ENCODE measurements at regions of chr14 and their contacts with region 1.

Region 1: GRCh38 chr14:64764641-64765520 is 60.7 kb downstream of the PLEKHG3 start:
- DNase-seq: peak; percentile 79
- ATAC-seq: peak; percentile 74
- H3K4me3 Mint-ChIP-seq: no peak overlapping the region
- H3K27ac Mint-ChIP-seq: no peak overlapping the region
- H3K4me1 Mint-ChIP-seq: peaks cover 35% of the 10 kb centered on the region
- H3K27me3 Mint-ChIP-seq: peaks cover 18% of the 10 kb centered on the region

Region 2: GRCh38 chr14:63875311-63875710 is 889.6 kb before region 1 on chr14:
- CTCF ChIA-PET with region 1: no interaction called
- DNase-seq: no peak
- ATAC-seq: no peak
- H3K4me3 Mint-ChIP-seq: no peak overlapping the region
- H3K27ac Mint-ChIP-seq: no peak overlapping the region
- H3K4me1 Mint-ChIP-seq: peaks cover 20% of the 10 kb centered on the region
- H3K27me3 Mint-ChIP-seq: no peaks in the 10 kb centered on the region

Region 3: DNA sequence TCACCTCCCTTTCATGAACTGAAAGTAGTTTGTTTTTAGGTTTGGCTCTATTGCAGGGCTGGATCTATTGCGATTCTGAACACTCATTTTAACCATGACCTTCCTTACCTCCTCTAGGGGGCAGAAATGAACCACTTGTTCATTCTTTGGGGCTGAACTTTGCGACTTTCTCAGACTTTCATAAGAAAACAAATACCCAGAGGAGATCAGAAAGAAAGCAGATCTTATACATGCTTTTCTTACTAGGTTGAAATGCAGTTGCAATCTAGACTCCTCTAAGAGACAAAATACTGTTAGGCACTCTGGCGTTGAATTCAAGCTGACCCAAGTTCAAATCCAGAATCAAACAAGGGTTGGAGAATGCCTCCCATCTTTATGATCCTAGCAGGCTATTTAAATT is 93.3 kb before region 1 on chr14:
- CTCF ChIA-PET with region 1: interaction called, 183 read pairs
- DNase-seq: no peak
- ATAC-seq: peak; percentile 55
- H3K4me3 Mint-ChIP-seq: no peak overlapping the region
- H3K27ac Mint-ChIP-seq: no peak overlapping the region
- H3K4me1 Mint-ChIP-seq: peaks cover 42% of the 10 kb centered on the region
- H3K27me3 Mint-ChIP-seq: peaks cover 12% of the 10 kb centered on the region

Region 4: GRCh38 chr14:64688811-64689281 is 76.0 kb before region 1 on chr14:
- CTCF ChIA-PET with region 1: interaction called, 11 read pairs
- DNase-seq: no peak
- ATAC-seq: no peak
- H3K4me3 Mint-ChIP-seq: no peak overlapping the region
- H3K27ac Mint-ChIP-seq: no peak overlapping the region
- H3K4me1 Mint-ChIP-seq: peaks cover 18% of the 10 kb centered on the region
- H3K27me3 Mint-ChIP-seq: peaks cover 16% of the 10 kb centered on the region

Region 5: GRCh38 chr14:64704143-64704742 is 60.6 kb before region 1 on chr14 and contains the start of gene PLEKHG3:
- CTCF ChIA-PET with region 1: interaction called, 12 read pairs
- DNase-seq: no peak
- ATAC-seq: peak; percentile 47
- H3K4me3 Mint-ChIP-seq: peak within 1 kb of the TSS; percentile 67
- H3K27ac Mint-ChIP-seq: peak within 1 kb of the TSS; percentile 47
- H3K4me1 Mint-ChIP-seq: peaks cover 61% of the 10 kb centered on the region
- H3K27me3 Mint-ChIP-seq: peaks cover 64% of the 10 kb centered on the region
- total RNA-seq, gene PLEKHG3: 11.9 to 28.2 TPM

Region 6: GRCh38 chr14:64835431-64835830 is 70.5 kb after region 1 on chr14:
- CTCF ChIA-PET with region 1: no interaction called
- DNase-seq: no peak
- ATAC-seq: no peak
- H3K4me3 Mint-ChIP-seq: no peak overlapping the region
- H3K27ac Mint-ChIP-seq: no peak overlapping the region
- H3K4me1 Mint-ChIP-seq: no peaks in the 10 kb centered on the region
- H3K27me3 Mint-ChIP-seq: peaks cover 35% of the 10 kb centered on the region

Region 7: GRCh38 chr14:64906022-64906421 is 141.1 kb after region 1 on chr14:
- CTCF ChIA-PET with region 1: no interaction called
- DNase-seq: no peak
- ATAC-seq: no peak
- H3K4me3 Mint-ChIP-seq: no peak overlapping the region
- H3K27ac Mint-ChIP-seq: no peak overlapping the region
- H3K4me1 Mint-ChIP-seq: peaks cover 4% of the 10 kb centered on the region
- H3K27me3 Mint-ChIP-seq: peaks cover 54% of the 10 kb centered on the region

Region 8: GRCh38 chr14:64942531-64943111 is 177.7 kb after region 1 on chr14 and contains the start of gene GPX2:
- CTCF ChIA-PET with region 1: no interaction called
- DNase-seq: peak; percentile 33
- ATAC-seq: no peak
- H3K4me3 Mint-ChIP-seq: no peak within 1 kb of the TSS
- H3K27ac Mint-ChIP-seq: peak within 1 kb of the TSS; percentile 38
- H3K4me1 Mint-ChIP-seq: peaks cover 23% of the 10 kb centered on the region
- H3K27me3 Mint-ChIP-seq: no peaks in the 10 kb centered on the region
- total RNA-seq, gene GPX2: not detected

Measured in activated CD8-positive, alpha-beta memory T cell treated with anti-CD3 and anti-CD28 coated beads, Interleukin-2, amount 10 ng/mL, durations not matched to agents 7 days and 5 days (primary cell).